OCI-LY7 (cell line): ENCODE measurements at regions of chrX and their contacts with region 1.

Region 1: DNA sequence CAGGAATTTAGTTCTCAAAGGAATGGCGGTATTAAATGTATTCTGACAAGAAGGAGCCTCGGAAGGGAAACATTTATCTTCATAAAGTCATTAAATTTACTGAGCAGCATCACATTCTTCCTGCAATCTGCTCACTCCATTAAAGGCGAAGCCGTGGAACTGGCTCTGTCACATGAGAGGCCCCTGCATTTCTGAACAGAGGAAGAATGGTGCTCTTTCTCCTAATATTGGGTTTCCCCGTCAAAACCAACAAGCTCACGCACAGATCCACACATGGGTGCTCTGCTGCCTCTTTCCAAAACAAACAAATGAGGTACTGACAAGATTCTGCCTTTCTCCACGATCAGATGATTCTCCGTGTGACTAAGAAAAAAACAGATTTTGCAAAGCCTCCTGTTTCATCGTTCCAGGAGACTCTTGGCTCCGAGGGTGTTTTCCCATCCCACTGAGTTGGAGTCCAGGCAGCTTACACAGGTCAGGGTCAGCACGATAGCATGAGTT is 191.2 kb downstream of the IDS start:
- DNase-seq: no peak
- H3K4me3 ChIP-seq: no peak overlapping the region
- H3K27ac ChIP-seq: no peak overlapping the region
- H3K4me1 ChIP-seq: no peaks in the 10 kb centered on the region
- CTCF ChIP-seq: no peak

Region 2: GRCh38 chrX:149699761-149700160 is 385.8 kb after region 1 on chrX:
- CTCF ChIA-PET with region 1: no interaction called
- POLR2A ChIA-PET with region 1: no interaction called
- intact Hi-C with region 1: loop called (anchors 5 kb)
- DNase-seq: peak; percentile 1
- H3K4me3 ChIP-seq: no peak overlapping the region
- H3K27ac ChIP-seq: no peak overlapping the region
- H3K4me1 ChIP-seq: no peaks in the 10 kb centered on the region
- CTCF ChIP-seq: no peak